ENCODE measurements at regions of chr6 and their contacts with region 1.

Region 1: DNA sequence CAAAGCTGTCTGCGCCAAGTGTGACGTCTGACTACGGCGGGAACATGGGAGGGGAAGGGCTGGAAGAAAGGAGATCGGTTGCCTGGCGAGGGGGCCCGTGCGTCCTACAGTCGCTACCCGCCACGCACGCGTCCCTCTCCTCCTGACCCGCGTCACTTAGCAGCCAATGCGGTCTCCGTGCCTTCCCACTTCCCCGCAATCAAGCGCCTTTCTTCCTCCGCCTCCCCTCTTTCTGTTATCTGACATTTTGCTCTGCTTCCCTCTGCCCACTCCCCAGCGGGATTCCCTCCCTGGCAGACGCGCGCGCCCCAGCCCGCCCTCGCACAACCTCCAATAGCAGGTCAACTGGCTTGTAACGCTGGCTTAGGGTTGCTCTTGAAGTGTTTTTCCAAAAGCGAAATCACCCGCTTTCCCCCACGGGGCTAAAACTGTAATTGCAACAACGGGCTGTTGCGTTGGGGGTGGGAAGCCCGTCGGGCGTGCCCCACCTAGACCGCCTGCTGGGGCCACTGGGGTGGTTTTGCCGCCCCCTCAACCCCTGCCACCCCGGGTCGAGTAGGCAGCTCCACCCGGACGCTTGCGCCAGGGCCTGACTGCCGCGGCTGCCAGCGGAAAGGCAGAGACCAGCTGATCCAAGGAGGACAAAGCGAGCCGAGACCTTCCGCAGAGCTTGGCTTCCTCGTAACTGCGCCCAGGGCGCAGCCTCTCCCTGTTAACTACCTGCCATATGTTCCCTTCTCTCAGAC is 6.2 kb upstream of the SOX4 start:
- DNase-seq: peak; percentile 66 to 67
- H3K4me3 ChIP-seq: peak overlapping the region; percentile 97
- H3K27ac ChIP-seq: peak overlapping the region; percentile 83
- H3K4me1 ChIP-seq: peaks cover 8% of the 10 kb centered on the region
- H3K27me3 ChIP-seq: no peaks in the 10 kb centered on the region
- CTCF ChIP-seq: no peak

Region 2: DNA sequence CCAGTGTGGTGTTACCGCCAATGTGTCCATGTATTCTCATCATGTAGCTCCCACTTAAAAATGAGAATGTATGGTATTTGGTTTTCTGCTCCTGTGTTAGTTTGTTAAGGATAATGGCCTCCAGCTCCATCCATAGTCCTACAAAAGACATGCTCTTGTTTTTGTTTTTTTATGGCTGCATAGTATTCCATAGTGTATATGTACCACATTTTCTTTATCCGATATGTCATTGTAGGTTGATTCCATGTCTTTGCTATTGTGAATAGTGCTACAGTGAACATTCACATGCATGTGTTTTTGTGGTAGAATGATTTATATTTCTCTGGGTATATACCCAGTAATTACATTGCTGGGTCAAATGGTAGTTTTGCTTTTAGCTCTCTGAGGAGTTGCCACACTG is 845.9 kb before region 1 on chr6:
- CTCF ChIA-PET with region 1: interaction called, 11 read pairs
- POLR2A ChIA-PET with region 1: no interaction called
- intact Hi-C with region 1: no loop called
- DNase-seq: no peak
- H3K4me3 ChIP-seq: no peak overlapping the region
- H3K27ac ChIP-seq: no peak overlapping the region
- H3K4me1 ChIP-seq: no peaks in the 10 kb centered on the region
- H3K27me3 ChIP-seq: no peaks in the 10 kb centered on the region
- CTCF ChIP-seq: no peak

Region 3: GRCh38 chr6:21022343-21023107 is 564.8 kb before region 1 on chr6:
- CTCF ChIA-PET with region 1: no interaction called
- POLR2A ChIA-PET with region 1: interaction called, 4 read pairs
- intact Hi-C with region 1: loop called (anchors 1 kb)
- DNase-seq: peak; percentile 62 to 77
- H3K4me3 ChIP-seq: no peak overlapping the region
- H3K27ac ChIP-seq: peak overlapping the region; percentile 78
- H3K4me1 ChIP-seq: peaks cover 26% of the 10 kb centered on the region
- H3K27me3 ChIP-seq: no peaks in the 10 kb centered on the region
- CTCF ChIP-seq: no peak

Region 4: GRCh38 chr6:21277601-21278374 is 309.6 kb before region 1 on chr6:
- CTCF ChIA-PET with region 1: interaction called, 7 read pairs
- POLR2A ChIA-PET with region 1: no interaction called
- intact Hi-C with region 1: loop called (anchors 1 kb)
- DNase-seq: peak; percentile 62 to 74
- H3K4me3 ChIP-seq: no peak overlapping the region
- H3K27ac ChIP-seq: no peak overlapping the region
- H3K4me1 ChIP-seq: 0 out of 2 replicates have a peak, but pooled peaks cover 3% of the 10 kb centered on the region
- H3K27me3 ChIP-seq: no peaks in the 10 kb centered on the region
- CTCF ChIP-seq: no peak

Region 5: GRCh38 chr6:22145823-22146677 is 558.7 kb after region 1 on chr6:
- CTCF ChIA-PET with region 1: no interaction called
- POLR2A ChIA-PET with region 1: interaction called, 14 read pairs
- intact Hi-C with region 1: no loop called
- DNase-seq: no peak
- H3K4me3 ChIP-seq: no peak overlapping the region
- H3K27ac ChIP-seq: no peak overlapping the region
- H3K4me1 ChIP-seq: peaks cover 13% of the 10 kb centered on the region
- H3K27me3 ChIP-seq: no peaks in the 10 kb centered on the region
- CTCF ChIP-seq: no peak